Activated naive CD4-positive, alpha-beta T cell treated with anti-CD3 and anti-CD28 coated beads for 36 hours (primary cell): ENCODE measurements at regions of chr6 and their contacts with region 1.

Region 1: GRCh38 chr6:43629505-43630300 is 639 bp upstream of the GTPBP2 start:
- DNase-seq: peak; percentile 98
- H3K4me3 Mint-ChIP-seq: peak overlapping the region; percentile 98
- H3K27ac Mint-ChIP-seq: peak overlapping the region; percentile 99
- H3K4me1 Mint-ChIP-seq: peaks cover 33% of the 10 kb centered on the region
- H3K27me3 Mint-ChIP-seq: no peaks in the 10 kb centered on the region

Region 2: GRCh38 chr6:43059168-43060033 is 570.3 kb before region 1 on chr6 and contains the starts of genes KLC4 and MRPL2:
- CTCF ChIA-PET with region 1: no interaction called
- intact Hi-C with region 1: loop called (anchors 5 kb)
- DNase-seq: peak; percentile 99
- H3K4me3 Mint-ChIP-seq: peak within 1 kb of the TSS; percentile 86
- H3K27ac Mint-ChIP-seq: peak within 1 kb of the TSS; percentile 93
- H3K4me1 Mint-ChIP-seq: peaks cover 29% of the 10 kb centered on the region
- H3K27me3 Mint-ChIP-seq: no peaks in the 10 kb centered on the region
- total RNA-seq, gene KLC4: 12.0 to 12.3 TPM
- total RNA-seq, gene MRPL2: 87.7 to 95.1 TPM

Region 3: GRCh38 chr6:43427406-43428111 is 202.1 kb before region 1 on chr6 and contains the start of gene ABCC10:
- CTCF ChIA-PET with region 1: no interaction called
- intact Hi-C with region 1: loop called (anchors 1 kb)
- DNase-seq: peak; percentile 97
- H3K4me3 Mint-ChIP-seq: peak within 1 kb of the TSS; percentile 87
- H3K27ac Mint-ChIP-seq: peak within 1 kb of the TSS; percentile 86
- H3K4me1 Mint-ChIP-seq: peaks cover 21% of the 10 kb centered on the region
- H3K27me3 Mint-ChIP-seq: no peaks in the 10 kb centered on the region
- total RNA-seq, gene ABCC10: 22.7 to 26.6 TPM

Region 4: GRCh38 chr6:43570876-43571441 is 58.7 kb before region 1 on chr6:
- CTCF ChIA-PET with region 1: no interaction called
- intact Hi-C with region 1: loop called (anchors 1 kb)
- DNase-seq: peak; percentile 34
- H3K4me3 Mint-ChIP-seq: no peak overlapping the region
- H3K27ac Mint-ChIP-seq: peak overlapping the region; percentile 89
- H3K4me1 Mint-ChIP-seq: peaks cover 36% of the 10 kb centered on the region
- H3K27me3 Mint-ChIP-seq: no peaks in the 10 kb centered on the region

Region 5: GRCh38 chr6:43644931-43645612 is 15.4 kb after region 1 on chr6 and contains the start of gene RSPH9:
- CTCF ChIA-PET with region 1: no interaction called
- intact Hi-C with region 1: loop called (anchors 1 kb)
- DNase-seq: peak; percentile 82
- H3K4me3 Mint-ChIP-seq: peak within 1 kb of the TSS; percentile 75
- H3K27ac Mint-ChIP-seq: no peak within 1 kb of the TSS
- H3K4me1 Mint-ChIP-seq: peaks cover 11% of the 10 kb centered on the region
- H3K27me3 Mint-ChIP-seq: no peaks in the 10 kb centered on the region
- total RNA-seq, gene RSPH9: not detected

Region 6: DNA sequence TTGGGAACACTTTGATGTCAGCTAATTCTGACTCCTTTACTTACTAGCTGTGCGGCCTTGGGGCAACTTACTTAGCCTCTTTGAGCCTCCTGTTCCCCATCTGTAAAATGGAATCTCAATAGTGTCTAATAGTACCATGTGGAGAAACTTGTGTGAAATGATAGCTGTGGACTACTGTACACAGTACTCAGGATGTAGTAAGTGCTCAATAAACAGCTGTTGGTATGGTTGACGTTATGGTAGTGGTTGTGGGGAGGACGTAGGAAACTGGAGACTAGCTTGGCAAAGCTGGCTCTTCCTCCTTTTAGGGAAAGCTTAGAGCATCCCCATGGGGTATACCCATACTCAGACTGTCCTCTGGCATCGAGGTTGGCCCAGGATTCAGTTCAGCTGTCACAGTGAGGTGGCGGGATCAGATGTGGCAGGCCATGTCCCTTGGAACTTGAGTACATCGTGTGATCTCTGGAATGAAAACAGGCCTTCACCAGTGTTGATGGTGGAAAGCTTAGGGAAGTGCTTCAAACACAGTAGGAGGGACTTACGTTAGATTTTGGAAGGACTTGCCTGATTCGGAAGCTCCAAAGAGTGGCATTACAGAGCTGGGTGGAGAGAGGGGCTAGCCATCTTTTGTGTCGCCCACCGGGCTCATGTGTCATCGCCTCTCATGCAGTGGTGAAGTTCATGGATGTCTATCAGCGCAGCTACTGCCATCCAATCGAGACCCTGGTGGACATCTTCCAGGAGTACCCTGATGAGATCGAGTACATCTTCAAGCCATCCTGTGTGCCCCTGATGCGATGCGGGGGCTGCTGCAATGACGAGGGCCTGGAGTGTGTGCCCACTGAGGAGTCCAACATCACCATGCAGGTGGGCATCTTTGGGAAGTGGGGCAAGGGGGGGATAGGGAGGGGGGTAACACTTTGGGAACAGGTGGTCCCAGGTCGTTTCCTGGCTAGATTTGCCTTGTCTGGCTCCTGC is 147.4 kb after region 1 on chr6:
- CTCF ChIA-PET with region 1: no interaction called
- intact Hi-C with region 1: no loop called
- DNase-seq: no peak
- H3K4me3 Mint-ChIP-seq: no peak overlapping the region
- H3K27ac Mint-ChIP-seq: no peak overlapping the region
- H3K4me1 Mint-ChIP-seq: peaks cover 29% of the 10 kb centered on the region
- H3K27me3 Mint-ChIP-seq: no peaks in the 10 kb centered on the region

Region 7: GRCh38 chr6:44127186-44128019 is 497.7 kb after region 1 on chr6 and contains the starts of genes MRPL14 and TMEM63B:
- CTCF ChIA-PET with region 1: no interaction called
- intact Hi-C with region 1: loop called (anchors 1 kb)
- DNase-seq: peak; percentile 86
- H3K4me3 Mint-ChIP-seq: peak within 1 kb of the TSS; percentile 88
- H3K27ac Mint-ChIP-seq: peak within 1 kb of the TSS; percentile 93
- H3K4me1 Mint-ChIP-seq: peaks cover 41% of the 10 kb centered on the region
- H3K27me3 Mint-ChIP-seq: no peaks in the 10 kb centered on the region
- total RNA-seq, gene MRPL14: 40.9 to 41.0 TPM
- total RNA-seq, gene TMEM63B: 7.8 to 8.3 TPM